ENCODE measurements at regions of chr10 and their contacts with region 1.

Region 1: DNA sequence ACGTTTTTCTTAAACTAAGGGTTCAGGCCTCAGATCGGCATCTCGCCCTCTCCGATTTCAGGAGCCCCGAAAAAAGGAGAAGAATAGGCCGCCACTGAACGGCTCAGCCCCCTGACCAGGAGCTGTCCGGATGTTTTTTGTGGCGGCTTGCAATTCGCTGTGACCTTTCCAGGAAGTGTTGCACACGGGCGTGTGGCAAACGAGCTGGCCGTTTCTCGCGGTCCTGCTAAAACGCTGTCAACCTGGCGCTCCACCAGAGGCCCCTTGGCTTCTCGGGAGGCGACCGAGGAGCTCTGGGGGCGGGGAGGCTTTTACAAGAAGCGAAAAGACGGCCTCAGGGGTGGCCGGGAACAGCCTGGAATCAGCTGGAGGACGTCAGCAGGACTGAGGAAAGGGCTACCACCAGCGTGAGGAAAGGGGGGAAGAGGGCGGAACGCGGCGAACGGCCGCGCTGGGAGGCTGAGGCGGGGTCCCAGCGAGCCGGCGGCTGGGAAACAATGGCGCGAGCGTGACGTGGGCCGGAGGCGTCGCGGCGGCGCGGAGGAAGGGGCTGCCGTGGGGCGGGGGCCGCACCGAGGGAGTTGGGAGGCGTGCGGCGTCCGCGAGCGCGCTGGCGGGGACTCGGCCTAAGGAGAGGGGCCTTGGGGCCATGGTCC is 493 bp downstream of the NT5C2 start:
- DNase-seq: peak; percentile 94

Region 2: GRCh38 chr10:103153302-103154197 is 39.0 kb before region 1 on chr10:
- intact Hi-C with region 1: loop called (anchors 5 kb)
- DNase-seq: no peak

Region 3: GRCh38 chr10:103225939-103226338 is 33.4 kb after region 1 on chr10:
- intact Hi-C with region 1: loop called (anchors 5 kb)
- DNase-seq: no peak